IMR-90 (cell line): ENCODE measurements at regions of chr19 and their contacts with region 1.

Region 1: GRCh38 chr19:41449079-41449864 is 6.3 kb downstream of the ERICH4 start:
- DNase-seq: peak; percentile 61
- ATAC-seq: peak; percentile 100
- H3K4me3 ChIP-seq: peak overlapping the region; percentile 31; the same call in 1 of the 2 replicates
- H3K27ac ChIP-seq: no peak overlapping the region
- H3K4me1 ChIP-seq: no peaks in the 10 kb centered on the region
- H3K27me3 ChIP-seq: peaks cover 3% of the 10 kb centered on the region
- CTCF ChIP-seq: peak; percentile 95
- POLR2A ChIP-seq: no peak
- RAD21 ChIP-seq: peak; percentile 88

Region 2: DNA sequence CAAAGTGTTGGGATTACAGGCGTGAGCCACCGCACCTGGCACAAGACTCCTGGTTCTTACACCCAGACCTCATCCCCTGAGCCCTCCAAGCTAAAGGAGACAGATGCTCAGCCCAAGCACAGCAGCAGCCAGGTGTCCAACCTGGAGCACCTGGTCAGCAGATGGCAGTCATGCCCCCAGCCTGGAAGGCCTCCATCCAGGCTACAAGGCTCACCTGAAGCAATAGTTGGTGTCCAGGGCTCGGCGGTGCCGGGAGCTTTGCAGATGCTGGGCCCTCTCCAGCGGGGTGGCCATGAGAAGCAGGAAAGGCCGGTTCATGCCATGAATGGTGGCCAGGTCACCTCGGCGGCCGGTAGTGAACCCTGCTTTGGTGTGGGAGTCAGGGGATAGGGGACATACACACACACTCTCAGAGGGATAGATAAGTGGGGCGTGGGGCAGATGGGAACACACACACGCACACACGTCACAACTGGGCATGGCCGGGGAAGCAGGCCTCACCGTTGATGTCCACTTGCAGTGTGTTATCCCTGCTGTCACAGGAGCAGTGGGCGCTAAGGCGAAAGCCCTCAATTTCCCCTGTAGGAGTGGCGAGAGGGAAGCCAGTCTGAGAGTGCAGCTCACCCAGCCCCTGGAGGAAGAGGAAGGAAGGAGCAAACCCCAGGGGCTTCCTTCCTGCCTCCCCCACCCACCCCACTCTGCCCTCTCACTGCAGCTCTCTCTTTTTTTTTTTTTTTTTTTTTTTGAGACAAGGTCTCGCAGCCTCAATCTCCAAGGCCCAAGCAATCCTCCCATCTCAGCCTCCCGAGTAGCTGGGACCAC is 107.4 kb before region 1 on chr19:
- CTCF ChIA-PET with region 1: no interaction called
- POLR2A ChIA-PET with region 1: no interaction called
- dilution Hi-C with region 1: no loop called
- in situ Hi-C with region 1: no loop called
- intact Hi-C with region 1: no loop called
- DNase-seq: no peak
- ATAC-seq: no peak
- H3K4me3 ChIP-seq: no peak overlapping the region
- H3K27ac ChIP-seq: no peak overlapping the region
- H3K4me1 ChIP-seq: no peaks in the 10 kb centered on the region
- H3K27me3 ChIP-seq: no peaks in the 10 kb centered on the region
- CTCF ChIP-seq: no peak
- POLR2A ChIP-seq: no peak
- RAD21 ChIP-seq: no peak

Region 3: DNA sequence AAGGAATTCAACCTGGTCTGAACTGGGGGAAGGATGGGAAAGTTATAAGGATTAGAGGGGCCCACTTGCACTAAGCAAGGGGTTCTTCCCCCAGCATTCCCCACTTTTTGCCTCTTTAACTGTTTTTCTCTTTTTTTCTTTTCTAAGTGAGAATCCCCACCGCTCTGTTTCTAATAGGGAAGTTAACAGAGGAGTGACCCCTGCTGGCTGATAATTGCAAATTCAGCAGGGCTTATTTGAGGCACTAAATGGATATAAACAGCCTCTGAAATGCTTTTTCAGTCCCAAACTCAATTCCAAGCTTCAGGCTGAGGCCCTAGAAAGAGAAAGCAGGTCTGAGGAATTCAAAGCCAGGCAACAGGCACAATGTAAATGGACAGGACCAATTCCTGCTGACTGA is 88.5 kb after region 1 on chr19:
- CTCF ChIA-PET with region 1: no interaction called
- POLR2A ChIA-PET with region 1: no interaction called
- dilution Hi-C with region 1: no loop called
- in situ Hi-C with region 1: no loop called
- intact Hi-C with region 1: loop called (anchors 1 kb)
- DNase-seq: peak; percentile 22
- ATAC-seq: peak; percentile 67
- H3K4me3 ChIP-seq: no peak overlapping the region
- H3K27ac ChIP-seq: no peak overlapping the region
- H3K4me1 ChIP-seq: no peaks in the 10 kb centered on the region
- H3K27me3 ChIP-seq: peaks cover 19% of the 10 kb centered on the region
- CTCF ChIP-seq: peak; percentile 62
- POLR2A ChIP-seq: no peak
- RAD21 ChIP-seq: peak; percentile 54

Region 4: GRCh38 chr19:41563854-41564514 is 114.7 kb after region 1 on chr19:
- CTCF ChIA-PET with region 1: interaction called, 5 read pairs
- POLR2A ChIA-PET with region 1: no interaction called
- dilution Hi-C with region 1: no loop called
- in situ Hi-C with region 1: no loop called
- intact Hi-C with region 1: loop called (anchors 1 kb)
- DNase-seq: no peak
- ATAC-seq: no peak; the same call in 1 of the 2 replicates
- H3K4me3 ChIP-seq: no peak overlapping the region
- H3K27ac ChIP-seq: no peak overlapping the region
- H3K4me1 ChIP-seq: no peaks in the 10 kb centered on the region
- H3K27me3 ChIP-seq: peaks cover 20% of the 10 kb centered on the region
- CTCF ChIP-seq: no peak
- POLR2A ChIP-seq: no peak
- RAD21 ChIP-seq: no peak

Region 5: DNA sequence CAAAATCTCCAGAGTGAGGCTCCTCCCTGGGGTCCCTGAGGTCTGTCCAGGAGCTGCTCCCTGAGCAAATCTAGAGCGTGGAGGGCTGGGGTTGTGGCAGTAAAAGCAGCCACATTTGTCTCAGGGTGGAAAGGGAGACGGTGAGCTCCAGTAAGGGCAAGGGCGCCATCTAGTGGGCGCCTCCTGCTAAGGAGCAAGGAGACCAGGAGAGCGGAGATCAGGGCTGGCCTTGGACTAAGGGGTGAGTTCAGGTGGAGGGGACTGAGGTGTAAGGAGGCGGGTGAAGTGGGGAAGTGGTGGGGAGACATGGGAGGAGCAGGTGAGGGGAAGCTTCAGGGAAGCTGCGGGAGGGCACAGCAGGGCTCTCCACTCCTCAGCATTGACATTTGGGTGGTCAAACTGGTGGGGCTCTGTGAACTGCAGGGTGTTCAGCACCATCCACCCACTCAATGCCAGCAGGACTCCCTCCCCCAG is 121.4 kb after region 1 on chr19:
- CTCF ChIA-PET with region 1: interaction called, 8 read pairs
- POLR2A ChIA-PET with region 1: no interaction called
- dilution Hi-C with region 1: no loop called
- in situ Hi-C with region 1: loop called (anchors 5 kb)
- intact Hi-C with region 1: loop called (anchors 1 kb)
- DNase-seq: peak; percentile 57
- ATAC-seq: peak; percentile 99
- H3K4me3 ChIP-seq: no peak overlapping the region
- H3K27ac ChIP-seq: no peak overlapping the region
- H3K4me1 ChIP-seq: no peaks in the 10 kb centered on the region
- H3K27me3 ChIP-seq: peaks cover 2% of the 10 kb centered on the region; the same call in 1 of the 2 replicates
- CTCF ChIP-seq: peak; percentile 86
- POLR2A ChIP-seq: no peak
- RAD21 ChIP-seq: peak; percentile 79